CD8-positive, alpha-beta T cell (primary cell): ENCODE measurements at regions of chrX and their contacts with region 1.

Region 1: DNA sequence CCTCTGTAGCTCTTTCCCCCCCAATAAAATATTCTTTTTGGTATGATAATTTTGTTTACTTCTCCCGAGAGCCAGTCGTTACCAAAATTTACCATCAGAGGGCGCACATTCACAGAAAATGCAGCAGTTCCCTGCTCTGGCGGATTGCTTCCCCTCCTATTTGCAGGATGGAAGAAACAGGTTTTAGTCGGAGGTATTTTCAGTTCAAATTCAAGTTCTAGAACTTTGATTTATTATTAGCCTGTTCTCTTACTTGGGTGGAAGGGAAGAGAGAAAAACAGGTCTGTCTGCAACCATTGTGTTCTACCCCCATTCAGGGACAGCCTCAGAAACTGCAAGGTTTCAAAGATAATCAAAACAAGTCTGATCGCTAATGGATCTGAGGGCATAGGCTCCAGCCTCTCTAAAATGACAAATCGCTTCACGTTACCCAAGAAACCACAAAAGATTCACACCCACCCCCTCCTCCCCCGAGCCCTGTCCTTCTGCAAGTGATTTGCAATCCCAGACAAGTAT is 263.8 kb upstream of the RPS6KA3 start:
- DNase-seq: peak; percentile 21 to 70 (median 51)
- ATAC-seq: peak; percentile 62
- H3K4me3 ChIP-seq: no peak overlapping the region
- H3K4me3 Mint-ChIP-seq: no peak overlapping the region
- H3K27ac ChIP-seq: no peak overlapping the region
- H3K27ac Mint-ChIP-seq: no peak overlapping the region
- H3K4me1 ChIP-seq: no peaks in the 10 kb centered on the region
- H3K4me1 Mint-ChIP-seq: peaks cover 9% of the 10 kb centered on the region
- H3K27me3 ChIP-seq: peaks cover 0 to 2% of the 10 kb centered on the region in 2 experiments
- H3K27me3 Mint-ChIP-seq: peaks cover 12% of the 10 kb centered on the region
- CTCF ChIP-seq: peak; percentile 49

Region 2: GRCh38 chrX:20252381-20253231 is 277.9 kb before region 1 on chrX:
- CTCF ChIA-PET with region 1: interaction called, 6 read pairs
- POLR2A ChIA-PET with region 1: no interaction called
- intact Hi-C with region 1: loop called (anchors 5 to 10 kb)
- DNase-seq: peak; percentile 46 to 84 (median 71)
- ATAC-seq: peak; percentile 77
- H3K4me3 ChIP-seq: no peak overlapping the region
- H3K4me3 Mint-ChIP-seq: no peak overlapping the region
- H3K27ac ChIP-seq: peak overlapping the region in 1 of 2 experiments; percentile 49
- H3K27ac Mint-ChIP-seq: peak overlapping the region; percentile 78
- H3K4me1 ChIP-seq: peaks cover 30% of the 10 kb centered on the region
- H3K4me1 Mint-ChIP-seq: peaks cover 61% of the 10 kb centered on the region
- H3K27me3 ChIP-seq: no peaks in the 10 kb centered on the region
- H3K27me3 Mint-ChIP-seq: no peaks in the 10 kb centered on the region
- CTCF ChIP-seq: peak; percentile 49

Region 3: DNA sequence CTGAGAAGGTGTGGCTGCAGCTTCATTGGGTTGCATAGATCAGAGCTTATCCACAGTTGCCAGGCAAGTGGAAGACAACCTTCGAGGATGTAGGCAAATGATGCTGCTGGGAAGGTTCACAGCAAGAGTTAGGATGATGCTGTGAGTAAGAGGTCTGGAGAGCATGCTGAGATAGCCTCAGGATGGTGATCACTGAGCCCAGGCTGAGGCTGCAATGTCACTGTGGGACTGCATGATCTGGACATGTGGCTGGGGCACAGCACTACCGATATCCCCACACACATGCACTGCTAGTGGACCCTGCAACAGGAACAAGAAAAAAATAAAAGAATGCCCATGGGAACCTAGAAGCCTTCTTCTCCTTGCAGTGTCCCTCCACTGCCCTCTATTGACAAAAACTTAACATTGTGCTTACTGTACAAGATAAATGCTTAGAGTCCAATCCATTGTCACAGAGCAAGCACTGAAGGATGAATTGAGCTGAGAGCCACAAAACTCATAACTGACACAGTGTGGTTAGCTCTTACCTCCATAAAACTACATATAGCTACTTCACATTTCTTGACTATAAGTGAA is 949.3 kb after region 1 on chrX:
- CTCF ChIA-PET with region 1: interaction called, 29 read pairs
- POLR2A ChIA-PET with region 1: no interaction called
- intact Hi-C with region 1: loop called (anchors 1 kb)
- DNase-seq: peak in 2 of 9 experiments; percentile 44 to 57
- ATAC-seq: peak; percentile 52
- H3K4me3 ChIP-seq: no peak overlapping the region
- H3K4me3 Mint-ChIP-seq: no peak overlapping the region
- H3K27ac ChIP-seq: no peak overlapping the region
- H3K27ac Mint-ChIP-seq: no peak overlapping the region
- H3K4me1 ChIP-seq: peaks cover 3% of the 10 kb centered on the region
- H3K4me1 Mint-ChIP-seq: peaks cover 10% of the 10 kb centered on the region
- H3K27me3 ChIP-seq: no peaks in the 10 kb centered on the region
- H3K27me3 Mint-ChIP-seq: no peaks in the 10 kb centered on the region
- CTCF ChIP-seq: peak; percentile 58

Region 4: GRCh38 chrX:21745756-21746155 is 1215.3 kb after region 1 on chrX:
- CTCF ChIA-PET with region 1: interaction called, 59 read pairs
- POLR2A ChIA-PET with region 1: no interaction called
- intact Hi-C with region 1: loop called (anchors 1 to 2 kb)
- DNase-seq: peak in 8 of 9 experiments; percentile 8 to 53 (median 28)
- ATAC-seq: no peak
- H3K4me3 ChIP-seq: no peak overlapping the region
- H3K4me3 Mint-ChIP-seq: no peak overlapping the region
- H3K27ac ChIP-seq: no peak overlapping the region
- H3K27ac Mint-ChIP-seq: no peak overlapping the region
- H3K4me1 ChIP-seq: no peaks in the 10 kb centered on the region
- H3K4me1 Mint-ChIP-seq: no peaks in the 10 kb centered on the region
- H3K27me3 ChIP-seq: no peaks in the 10 kb centered on the region
- H3K27me3 Mint-ChIP-seq: peaks cover 5% of the 10 kb centered on the region
- CTCF ChIP-seq: peak; percentile 46

Region 5: GRCh38 chrX:21972721-21973120 is 1442.3 kb after region 1 on chrX:
- CTCF ChIA-PET with region 1: no interaction called
- POLR2A ChIA-PET with region 1: no interaction called
- intact Hi-C with region 1: loop called in 1 of 2 experiments (anchors 10 kb)
- DNase-seq: peak in 8 of 9 experiments; percentile 2 to 74 (median 37)
- ATAC-seq: peak; percentile 95
- H3K4me3 ChIP-seq: no peak overlapping the region
- H3K4me3 Mint-ChIP-seq: peak overlapping the region; percentile 57
- H3K27ac ChIP-seq: no peak overlapping the region
- H3K27ac Mint-ChIP-seq: peak overlapping the region; percentile 82
- H3K4me1 ChIP-seq: peaks cover 18% of the 10 kb centered on the region
- H3K4me1 Mint-ChIP-seq: peaks cover 22% of the 10 kb centered on the region
- H3K27me3 ChIP-seq: no peaks in the 10 kb centered on the region
- H3K27me3 Mint-ChIP-seq: no peaks in the 10 kb centered on the region
- CTCF ChIP-seq: no peak